Activated T-helper 2 cell treated with anti-CD3 and anti-CD28 coated beads, Interferon-gamma antibody, Interleukin-2, Interleukin-4, amounts not matched to agents 10 μg/mL and 5 μg/mL and 100 μg/mL, durations not matched to agents 14 hours and 24 hours and 36 hours (primary cell): ENCODE measurements at regions of chr14 and their contacts with region 1.

Region 1: GRCh38 chr14:55301437-55302121 is 30.4 kb downstream of the FBXO34 start:
- DNase-seq: no peak
- H3K4me3 Mint-ChIP-seq: no peak overlapping the region
- H3K27ac Mint-ChIP-seq: peak overlapping the region; percentile 54
- H3K4me1 Mint-ChIP-seq: peaks cover 50% of the 10 kb centered on the region
- H3K27me3 Mint-ChIP-seq: no peaks in the 10 kb centered on the region

Region 2: DNA sequence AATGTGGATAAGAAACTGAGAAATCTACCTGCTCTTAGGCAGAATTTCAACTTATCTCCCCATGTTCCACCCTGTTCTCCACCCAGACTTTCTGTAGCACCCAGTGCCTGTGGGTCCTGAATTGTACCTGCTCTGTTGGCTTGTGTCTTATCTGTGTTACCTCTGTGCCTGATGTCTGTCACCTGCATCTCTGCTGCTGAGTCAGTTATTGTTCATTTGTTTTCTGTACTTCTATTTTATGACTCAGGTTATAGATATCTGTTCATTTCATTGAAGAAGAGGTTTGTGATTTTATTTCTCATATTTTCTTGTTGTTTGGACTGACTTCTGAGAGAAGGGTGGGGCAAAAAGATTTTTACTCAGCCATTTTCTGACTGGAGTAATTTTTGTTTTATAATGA is 262.9 kb before region 1 on chr14:
- intact Hi-C with region 1: no loop called
- DNase-seq: no peak
- H3K4me3 Mint-ChIP-seq: no peak overlapping the region
- H3K27ac Mint-ChIP-seq: no peak overlapping the region
- H3K4me1 Mint-ChIP-seq: peaks cover 3% of the 10 kb centered on the region
- H3K27me3 Mint-ChIP-seq: no peaks in the 10 kb centered on the region

Region 3: GRCh38 chr14:55339770-55340169 is 38.2 kb after region 1 on chr14:
- intact Hi-C with region 1: loop called (anchors 5 kb)
- DNase-seq: no peak
- H3K4me3 Mint-ChIP-seq: no peak overlapping the region
- H3K27ac Mint-ChIP-seq: peak overlapping the region; percentile 78
- H3K4me1 Mint-ChIP-seq: peaks cover 68% of the 10 kb centered on the region
- H3K27me3 Mint-ChIP-seq: no peaks in the 10 kb centered on the region

Region 4: DNA sequence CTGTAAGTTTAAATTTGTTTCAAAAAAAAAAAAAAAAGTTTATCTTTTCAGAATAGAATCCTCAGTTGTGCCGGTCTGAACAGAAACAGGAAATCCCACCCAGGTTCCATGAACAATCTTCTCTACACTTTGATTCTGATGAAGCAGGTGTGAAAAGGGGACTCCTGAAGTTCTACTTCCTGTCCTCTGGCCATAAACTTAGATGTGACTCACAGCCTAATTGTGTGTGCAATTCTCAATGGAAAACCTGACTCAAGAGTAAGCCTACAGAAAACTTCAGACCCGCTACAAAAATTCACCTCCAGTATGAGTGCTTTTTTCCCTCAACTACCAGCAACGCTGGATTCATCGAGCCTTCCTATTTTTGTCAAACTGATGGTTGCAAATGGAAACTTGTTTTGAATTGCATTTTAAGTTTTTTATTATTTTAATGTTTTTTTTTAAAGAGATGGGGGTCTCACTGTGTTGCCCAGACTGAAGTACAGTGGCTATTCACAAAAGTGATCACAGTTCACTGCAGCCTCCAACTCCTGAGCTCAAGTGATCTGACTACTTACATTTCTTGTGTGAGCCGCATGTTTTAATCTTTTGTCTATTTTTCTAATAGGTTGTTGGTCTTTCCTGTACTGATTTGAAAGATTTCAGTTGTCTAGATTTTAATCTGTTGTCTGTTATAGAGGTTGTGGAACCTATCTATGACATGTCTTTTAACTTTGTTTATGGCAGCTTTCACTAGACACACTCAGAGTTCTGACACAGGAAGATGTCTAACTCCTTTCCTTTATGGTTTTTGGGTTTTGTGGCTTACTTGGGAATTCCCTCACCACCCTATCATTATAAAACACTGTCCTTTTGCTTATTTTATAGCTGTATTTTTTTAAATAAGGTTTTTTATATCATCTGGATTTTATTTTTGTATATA is 72.5 kb after region 1 on chr14:
- intact Hi-C with region 1: no loop called
- DNase-seq: peak; percentile 22
- H3K4me3 Mint-ChIP-seq: peak overlapping the region; percentile 44
- H3K27ac Mint-ChIP-seq: peak overlapping the region; percentile 95
- H3K4me1 Mint-ChIP-seq: peaks cover 25% of the 10 kb centered on the region
- H3K27me3 Mint-ChIP-seq: no peaks in the 10 kb centered on the region

Region 5: GRCh38 chr14:55446218-55446654 is 144.7 kb after region 1 on chr14:
- intact Hi-C with region 1: no loop called
- DNase-seq: peak; percentile 22
- H3K4me3 Mint-ChIP-seq: no peak overlapping the region
- H3K27ac Mint-ChIP-seq: no peak overlapping the region
- H3K4me1 Mint-ChIP-seq: peaks cover 23% of the 10 kb centered on the region
- H3K27me3 Mint-ChIP-seq: no peaks in the 10 kb centered on the region